ENCODE measurements at regions of chr14 and their contacts with region 1.

Region 1: GRCh38 chr14:64540208-64541157 is at the start of gene HSPA2:
- DNase-seq: peak; percentile 99 to 100 (median 99)
- H3K4me3 ChIP-seq: peak within 1 kb of the TSS; percentile 5 to 63 (median 38)
- H3K27ac ChIP-seq: peak within 1 kb of the TSS; percentile 35 to 88 (median 81)
- H3K4me1 ChIP-seq: peaks cover 0 to 12% of the 10 kb centered on the region in 2 donors
- H3K27me3 ChIP-seq: no peaks in the 10 kb centered on the region
- CTCF ChIP-seq: peak; percentile 63 to 92 (median 80)
- POLR2A ChIP-seq: peak; percentile 79 to 92
- total RNA-seq, gene HSPA2: 3.5 to 74.6 (median 16.5) TPM

Region 2: DNA sequence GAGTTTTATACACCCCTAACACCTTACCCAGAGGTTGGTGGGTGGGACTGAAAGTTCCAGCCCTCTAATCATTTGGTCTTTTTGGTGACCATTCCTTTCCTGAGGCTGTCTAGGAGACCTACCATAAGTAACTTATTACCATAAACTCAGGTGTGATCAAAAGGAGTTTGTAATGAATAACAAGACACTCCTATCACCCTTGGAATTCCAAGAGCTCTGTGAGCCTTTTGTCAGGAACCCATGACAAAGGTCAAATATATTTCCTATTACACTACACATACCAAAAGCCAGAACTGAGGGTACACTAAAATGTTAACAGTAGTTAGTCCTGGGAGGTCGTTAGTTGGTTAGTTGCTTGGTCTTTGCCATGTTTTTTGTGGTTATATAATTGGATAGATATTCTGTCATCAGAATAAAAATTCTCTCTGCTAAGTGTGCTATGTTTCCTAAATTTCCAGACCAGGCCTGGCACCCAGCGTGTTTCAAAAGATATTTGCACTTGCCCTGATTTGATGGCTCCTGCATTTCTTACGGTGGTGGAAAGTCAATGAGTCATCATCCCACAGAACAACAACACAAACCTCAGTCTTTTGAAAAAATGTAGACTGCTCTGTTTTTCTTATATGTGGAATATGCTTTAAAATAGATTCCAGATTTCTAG is 102.2 kb before region 1 on chr14:
- intact Hi-C with region 1: no loop called
- DNase-seq: no peak
- H3K4me3 ChIP-seq: no peak overlapping the region
- H3K27ac ChIP-seq: no peak overlapping the region
- H3K4me1 ChIP-seq: no peaks in the 10 kb centered on the region
- H3K27me3 ChIP-seq: no peaks in the 10 kb centered on the region
- CTCF ChIP-seq: no peak
- POLR2A ChIP-seq: no peak

Region 3: GRCh38 chr14:64636208-64636979 is 95.9 kb after region 1 on chr14:
- intact Hi-C with region 1: loop called (anchors 5 kb)
- DNase-seq: peak; percentile 62 to 86 (median 69)
- H3K4me3 ChIP-seq: no peak overlapping the region
- H3K27ac ChIP-seq: peak overlapping the region in 1 of 5 donors; percentile 24
- H3K4me1 ChIP-seq: peaks cover 0 to 6% of the 10 kb centered on the region in 2 donors
- H3K27me3 ChIP-seq: no peaks in the 10 kb centered on the region
- CTCF ChIP-seq: peak; percentile 75 to 93 (median 88)
- POLR2A ChIP-seq: no peak